Ovary (tissue), 10 donors: ENCODE measurements at regions of chr2 and their contacts with region 1.

Region 1: GRCh38 chr2:10122386-10123280 is at the start of gene RRM2:
- DNase-seq: peak; percentile 90 to 94 (median 91)
- H3K4me3 ChIP-seq: peak within 1 kb of the TSS; percentile 34
- H3K27ac ChIP-seq: no peak within 1 kb of the TSS
- H3K4me1 ChIP-seq: peaks cover 3% of the 10 kb centered on the region
- H3K27me3 ChIP-seq: no peaks in the 10 kb centered on the region
- CTCF ChIP-seq: no peak
- EP300 ChIP-seq: no peak
- POLR2A ChIP-seq: no peak
- total RNA-seq, gene RRM2: 0.24 to 4.6 (median 1.3) TPM in 5 of 7 donors, not detected in the others

Region 2: DNA sequence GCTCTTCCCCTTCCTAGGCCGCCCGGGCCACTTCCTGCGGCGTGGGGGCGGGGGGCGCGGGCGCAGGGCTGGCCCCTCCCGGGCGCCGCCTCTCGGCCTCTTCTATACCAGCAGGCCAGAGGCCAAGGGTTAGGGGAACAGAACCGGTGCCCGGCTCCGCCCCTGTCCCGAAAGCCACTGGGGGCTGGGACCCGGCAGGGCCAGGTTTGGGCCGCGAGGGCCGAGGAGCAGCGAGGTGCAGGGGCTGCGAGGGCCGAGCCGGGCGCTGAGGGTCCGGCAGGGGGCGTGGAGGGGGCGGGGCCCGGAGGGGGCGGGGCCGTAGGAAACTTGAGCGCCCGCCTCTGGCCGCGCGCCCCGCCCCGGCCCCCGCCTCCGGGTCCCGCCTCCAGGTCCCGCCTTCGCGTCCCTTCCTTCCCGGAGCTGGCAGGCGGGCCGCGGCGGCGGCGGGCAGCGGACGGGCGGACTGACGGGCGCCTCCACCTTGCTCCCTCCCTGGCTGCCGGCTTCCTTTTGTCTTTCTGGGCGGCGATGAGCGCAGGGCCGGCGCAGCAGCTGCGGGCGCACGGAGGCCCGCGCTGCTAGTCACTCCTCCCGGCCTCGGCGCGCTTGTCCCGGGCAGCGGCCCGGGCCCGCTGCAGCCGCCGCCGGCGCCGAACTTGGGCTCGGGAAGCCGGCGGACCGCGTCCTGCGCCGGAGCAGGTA is 180.0 kb after region 1 on chr2 and contains the start of gene HPCAL1:
- intact Hi-C with region 1: loop called in 3 of 4 experiments (anchors 5 to 10 kb)
- DNase-seq: peak; percentile 83 to 90 (median 88)
- H3K4me3 ChIP-seq: peak within 1 kb of the TSS; percentile 76
- H3K27ac ChIP-seq: peak within 1 kb of the TSS in 1 of 2 donors; percentile 72
- H3K4me1 ChIP-seq: peaks cover 5% of the 10 kb centered on the region
- H3K27me3 ChIP-seq: no peaks in the 10 kb centered on the region
- CTCF ChIP-seq: peak; percentile 36 to 74 (median 51)
- EP300 ChIP-seq: no peak
- POLR2A ChIP-seq: peak; percentile 58
- total RNA-seq, gene HPCAL1: 13.4 to 69.5 (median 18.5) TPM

Region 3: DNA sequence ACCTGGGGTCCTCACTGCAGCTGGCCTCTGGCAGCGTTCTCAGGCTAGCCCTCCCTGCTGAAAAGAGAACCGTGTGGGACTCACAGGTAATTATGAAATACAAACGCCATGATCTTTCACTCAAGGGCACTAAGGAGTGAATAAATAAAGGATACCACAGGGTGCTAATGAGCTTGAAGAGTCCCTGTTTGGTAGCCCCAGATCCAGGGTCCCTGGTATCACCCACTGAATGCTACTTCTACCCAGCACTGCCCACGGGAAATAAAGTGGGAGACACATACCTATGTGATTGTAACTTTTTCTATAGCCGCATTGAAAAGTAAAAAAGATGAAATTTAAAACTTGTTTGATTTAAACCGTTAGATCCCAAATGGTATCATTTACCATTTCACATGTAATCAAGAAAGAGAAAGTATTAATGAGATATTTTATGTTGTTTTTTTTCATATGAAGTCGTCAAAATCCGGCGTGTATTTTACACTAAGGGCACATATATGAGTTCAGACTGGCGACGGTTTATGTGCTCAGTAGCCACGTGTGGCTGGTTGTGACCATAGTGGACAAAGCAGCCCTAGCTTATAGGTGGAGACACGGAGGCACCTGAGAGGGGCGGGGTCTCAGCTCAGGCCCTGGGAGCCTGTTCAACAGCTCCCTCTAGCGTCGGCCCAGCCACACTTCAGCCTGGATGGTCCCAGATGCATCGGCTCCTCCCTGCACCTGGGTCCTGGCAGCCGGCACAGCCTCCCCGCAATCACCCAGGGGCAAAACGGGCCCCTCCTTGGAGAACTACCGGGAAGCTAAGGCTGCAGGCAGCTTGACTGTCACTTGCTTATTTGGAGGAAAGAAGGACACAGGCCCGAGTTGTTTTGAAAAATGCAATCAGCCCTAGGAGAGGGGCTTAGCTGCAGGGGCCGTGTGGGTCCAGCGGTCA is 286.3 kb after region 1 on chr2:
- intact Hi-C with region 1: loop called in 2 of 4 experiments (anchors 10 kb)
- DNase-seq: peak; percentile 57 to 80 (median 77)
- H3K4me3 ChIP-seq: no peak overlapping the region
- H3K27ac ChIP-seq: no peak overlapping the region
- H3K4me1 ChIP-seq: peaks cover 1% of the 10 kb centered on the region
- H3K27me3 ChIP-seq: no peaks in the 10 kb centered on the region
- CTCF ChIP-seq: peak; percentile 73 to 82 (median 76)
- EP300 ChIP-seq: no peak
- POLR2A ChIP-seq: no peak

Region 4: DNA sequence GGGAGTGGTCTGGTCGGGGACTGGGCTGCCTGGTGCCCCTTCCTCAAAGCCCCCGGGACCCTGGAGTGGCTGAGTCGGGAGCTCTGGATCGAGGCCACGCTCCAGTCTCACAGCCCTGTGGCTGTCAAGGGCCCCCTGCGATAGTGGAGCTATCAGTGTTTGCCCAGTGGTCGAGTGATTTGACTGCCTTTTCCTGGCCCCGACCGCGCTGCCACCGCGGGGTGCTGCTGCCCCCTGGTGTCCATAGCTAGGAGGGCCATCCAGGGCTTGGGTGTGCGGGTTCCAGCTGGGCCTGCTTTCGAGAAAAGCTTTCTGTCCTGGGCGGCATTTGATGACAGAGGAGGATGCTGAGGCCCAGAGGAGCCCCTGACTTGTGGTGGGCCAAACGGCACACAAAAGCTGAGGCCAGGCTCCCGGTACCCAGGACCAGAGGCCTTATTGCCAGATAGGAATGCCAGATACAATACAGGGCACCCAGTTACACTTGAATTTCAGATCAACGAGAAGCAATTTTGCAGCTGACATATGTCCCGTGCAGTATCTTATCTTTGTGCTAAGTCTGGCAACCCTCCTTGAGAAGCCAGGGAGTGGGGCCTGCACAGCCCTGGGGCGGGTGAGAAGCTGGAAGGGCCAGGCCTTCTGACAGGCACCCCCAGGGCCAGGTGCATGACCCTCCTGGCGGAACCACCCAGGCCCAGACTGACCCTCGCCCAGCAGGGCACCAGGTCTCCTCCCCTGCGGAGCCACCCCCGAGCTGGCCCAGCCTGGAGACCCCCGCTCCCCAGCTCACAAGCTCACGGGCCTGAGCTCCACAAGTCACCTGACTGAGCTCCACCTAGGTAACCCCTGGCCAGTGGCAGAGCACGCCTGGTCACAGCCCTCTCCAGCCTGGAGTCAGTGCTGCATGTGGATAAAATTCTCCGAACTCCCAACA is 312.5 kb after region 1 on chr2:
- intact Hi-C with region 1: loop called (anchors 2 to 10 kb)
- DNase-seq: peak; percentile 60 to 86 (median 75)
- H3K4me3 ChIP-seq: no peak overlapping the region
- H3K27ac ChIP-seq: no peak overlapping the region
- H3K4me1 ChIP-seq: no peaks in the 10 kb centered on the region
- H3K27me3 ChIP-seq: no peaks in the 10 kb centered on the region
- CTCF ChIP-seq: peak; percentile 78 to 92 (median 87)
- EP300 ChIP-seq: no peak
- POLR2A ChIP-seq: no peak